Dorsolateral prefrontal cortex (tissue), 120 donors: ENCODE measurements at regions of chr1 and their contacts with region 1.

Region 1: GRCh38 chr1:86507935-86508582 is 38.8 kb upstream of the CLCA4 start:
- DNase-seq: no peak
- H3K4me3 ChIP-seq: no peak overlapping the region
- H3K27ac ChIP-seq: no peak overlapping the region
- H3K27me3 ChIP-seq: no peaks in the 10 kb centered on the region
- CTCF ChIP-seq: peak in 54 of 56 donors; percentile 15 to 70 (median 55)

Region 2: GRCh38 chr1:86247597-86248279 is 260.3 kb before region 1 on chr1:
- intact Hi-C with region 1: no loop called
- DNase-seq: no peak
- H3K4me3 ChIP-seq: no peak overlapping the region
- H3K27ac ChIP-seq: no peak overlapping the region
- H3K27me3 ChIP-seq: no peaks in the 10 kb centered on the region
- CTCF ChIP-seq: no peak

Region 3: DNA sequence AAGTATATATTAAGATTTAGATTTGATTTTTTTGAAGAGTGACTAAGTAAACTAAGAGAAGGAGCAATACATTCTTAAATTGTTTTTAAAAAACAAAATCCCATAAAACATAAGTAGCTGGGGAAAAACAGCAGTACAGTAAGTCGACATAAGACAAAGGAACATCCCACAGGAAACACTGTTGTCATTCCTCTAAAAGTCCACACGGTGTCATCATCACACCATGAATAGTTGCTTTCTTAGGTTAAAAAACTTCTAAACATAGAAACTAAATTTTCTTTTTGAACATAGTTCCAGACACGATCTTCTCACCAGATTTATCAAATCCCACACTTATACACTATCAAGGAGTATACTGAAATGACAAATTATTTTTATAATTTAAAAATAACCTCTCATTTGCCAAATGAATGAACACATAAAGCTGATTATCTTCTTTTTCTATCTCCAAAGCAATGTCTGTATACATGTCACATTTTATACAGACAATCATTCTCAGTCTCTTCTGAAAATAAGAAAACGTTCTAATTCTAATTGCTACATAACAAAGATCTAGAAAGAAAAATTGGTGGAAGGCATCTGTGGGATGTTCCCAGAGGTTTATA is 127.7 kb before region 1 on chr1:
- intact Hi-C with region 1: loop called (anchors 2 to 5 kb)
- DNase-seq: no peak
- H3K4me3 ChIP-seq: peak overlapping the region in 8 of 59 donors; percentile 0 to 34 (median 10)
- H3K27ac ChIP-seq: no peak overlapping the region
- H3K27me3 ChIP-seq: no peaks in the 10 kb centered on the region
- CTCF ChIP-seq: peak; percentile 75 to 98 (median 87)